ENCODE measurements at regions of chr2 and their contacts with region 1.

Region 1: DNA sequence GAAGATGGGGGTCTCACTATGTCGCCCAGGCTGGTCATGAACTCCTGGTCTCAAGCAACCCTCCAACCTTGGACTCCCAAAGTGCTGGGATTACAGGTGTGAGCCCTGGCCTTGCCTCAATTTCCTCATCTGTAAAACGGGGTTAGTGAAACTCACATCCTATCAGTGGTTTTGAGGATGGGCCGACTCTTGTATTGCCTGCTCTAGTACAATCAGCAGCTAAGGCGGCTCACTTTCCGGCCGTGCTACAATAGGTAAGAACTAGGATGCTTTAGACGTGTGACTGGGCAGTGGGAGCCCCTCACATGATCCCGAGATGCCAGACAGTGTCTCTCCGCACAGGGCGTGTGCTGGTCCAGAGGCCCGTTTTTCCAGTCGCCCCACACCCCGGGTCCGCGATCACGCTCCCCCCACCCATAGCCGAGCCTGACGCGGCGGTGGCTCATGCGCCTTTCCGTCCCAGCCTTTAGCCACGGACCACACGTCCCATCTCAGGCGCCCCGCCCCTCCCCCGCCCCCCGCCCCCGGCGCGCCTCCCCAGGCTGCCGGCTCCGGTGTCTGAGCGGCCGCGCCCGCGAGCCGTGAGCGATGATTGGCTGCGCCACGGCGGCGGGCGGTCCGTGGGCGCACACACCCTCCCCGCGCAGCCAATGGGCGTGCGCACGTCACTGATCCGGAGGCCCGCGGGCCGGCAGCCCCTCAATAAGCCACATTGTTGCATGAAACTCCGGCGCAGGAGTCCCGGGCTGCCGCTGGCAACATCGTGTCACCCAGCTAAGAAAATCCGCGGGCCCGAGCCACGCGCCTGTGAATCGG is at the start of gene HK2:
- DNase-seq: peak; percentile 88
- ATAC-seq: peak; percentile 92
- H3K4me3 Mint-ChIP-seq: peak within 1 kb of the TSS; percentile 89
- H3K27ac Mint-ChIP-seq: peak within 1 kb of the TSS; percentile 91
- H3K4me1 Mint-ChIP-seq: peaks cover 46% of the 10 kb centered on the region
- H3K27me3 Mint-ChIP-seq: peaks cover 10% of the 10 kb centered on the region
- total RNA-seq, gene HK2: 32.2 to 45.8 TPM

Region 2: DNA sequence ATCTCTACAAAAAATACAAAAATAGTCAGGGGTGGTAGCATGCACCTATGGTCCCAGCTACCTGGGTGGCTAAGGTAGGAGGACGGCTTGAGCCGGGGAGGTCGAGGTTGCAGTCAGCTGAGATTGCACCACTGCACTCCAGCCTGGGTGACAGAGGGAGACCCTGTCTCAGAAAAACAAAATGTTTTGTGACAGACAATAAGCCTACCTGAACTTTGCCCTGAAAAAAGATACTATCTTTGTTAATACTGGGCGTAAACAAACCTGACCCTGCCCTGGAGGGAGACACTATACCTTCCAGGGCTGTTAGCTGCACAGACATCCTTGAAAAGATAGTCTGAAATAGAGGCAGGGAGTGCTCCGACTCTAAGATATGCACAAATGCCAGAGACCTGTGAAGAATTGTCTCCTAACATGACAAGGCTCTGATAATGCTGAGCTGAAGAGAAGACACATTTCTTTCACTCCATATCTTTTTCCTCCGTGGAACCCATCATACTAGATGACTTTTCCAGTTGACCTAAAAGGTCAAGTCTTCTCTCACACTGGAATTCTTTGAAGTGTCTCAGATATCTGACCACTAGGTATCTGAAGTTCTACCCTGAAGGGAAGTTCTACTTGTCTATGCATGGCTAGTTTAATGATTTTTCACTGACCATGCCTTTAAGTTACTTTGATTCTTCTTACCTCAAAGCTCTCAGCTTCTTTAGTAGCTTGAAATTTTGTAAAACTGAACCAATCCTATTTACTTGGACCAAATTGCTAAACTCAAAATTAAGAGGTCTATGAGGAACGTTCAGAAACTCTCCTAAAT is 20.6 kb before region 1 on chr2:
- CTCF ChIA-PET with region 1: no interaction called
- DNase-seq: no peak
- ATAC-seq: no peak
- H3K4me3 Mint-ChIP-seq: no peak overlapping the region
- H3K27ac Mint-ChIP-seq: no peak overlapping the region
- H3K4me1 Mint-ChIP-seq: no peaks in the 10 kb centered on the region
- H3K27me3 Mint-ChIP-seq: peaks cover 42% of the 10 kb centered on the region

Region 3: DNA sequence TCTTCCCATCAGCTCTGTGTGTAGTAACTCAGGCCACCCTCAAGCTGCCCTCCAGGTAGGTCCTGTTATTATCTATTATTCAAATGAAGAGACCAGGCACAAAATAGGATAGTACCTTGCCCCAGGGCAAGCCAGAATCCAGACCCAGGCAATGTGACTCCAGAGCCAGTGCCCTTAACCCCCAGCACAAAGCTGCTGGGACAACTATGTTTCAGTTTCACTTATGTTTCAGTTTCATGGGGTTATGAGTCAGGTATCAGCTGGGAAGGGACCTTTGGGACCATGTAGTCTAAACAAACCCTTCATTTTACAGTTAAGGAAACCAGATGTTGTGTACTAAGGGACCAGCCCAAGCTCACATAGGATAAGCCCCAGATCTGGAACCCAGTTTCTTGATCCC is 10.3 kb after region 1 on chr2:
- CTCF ChIA-PET with region 1: interaction called, 67 read pairs
- DNase-seq: peak; percentile 73
- ATAC-seq: peak; percentile 93
- H3K4me3 Mint-ChIP-seq: peak overlapping the region; percentile 61
- H3K27ac Mint-ChIP-seq: peak overlapping the region; percentile 89
- H3K4me1 Mint-ChIP-seq: peaks cover 87% of the 10 kb centered on the region
- H3K27me3 Mint-ChIP-seq: no peaks in the 10 kb centered on the region

Region 4: GRCh38 chr2:74849228-74849892 is 15.7 kb after region 1 on chr2:
- CTCF ChIA-PET with region 1: interaction called, 67 read pairs
- DNase-seq: peak; percentile 69
- ATAC-seq: peak; percentile 88
- H3K4me3 Mint-ChIP-seq: peak overlapping the region; percentile 64
- H3K27ac Mint-ChIP-seq: peak overlapping the region; percentile 94
- H3K4me1 Mint-ChIP-seq: peaks cover 60% of the 10 kb centered on the region
- H3K27me3 Mint-ChIP-seq: no peaks in the 10 kb centered on the region